AG04449 (cell line): ENCODE measurements at regions of chr2 and their contacts with region 1.

Region 1: DNA sequence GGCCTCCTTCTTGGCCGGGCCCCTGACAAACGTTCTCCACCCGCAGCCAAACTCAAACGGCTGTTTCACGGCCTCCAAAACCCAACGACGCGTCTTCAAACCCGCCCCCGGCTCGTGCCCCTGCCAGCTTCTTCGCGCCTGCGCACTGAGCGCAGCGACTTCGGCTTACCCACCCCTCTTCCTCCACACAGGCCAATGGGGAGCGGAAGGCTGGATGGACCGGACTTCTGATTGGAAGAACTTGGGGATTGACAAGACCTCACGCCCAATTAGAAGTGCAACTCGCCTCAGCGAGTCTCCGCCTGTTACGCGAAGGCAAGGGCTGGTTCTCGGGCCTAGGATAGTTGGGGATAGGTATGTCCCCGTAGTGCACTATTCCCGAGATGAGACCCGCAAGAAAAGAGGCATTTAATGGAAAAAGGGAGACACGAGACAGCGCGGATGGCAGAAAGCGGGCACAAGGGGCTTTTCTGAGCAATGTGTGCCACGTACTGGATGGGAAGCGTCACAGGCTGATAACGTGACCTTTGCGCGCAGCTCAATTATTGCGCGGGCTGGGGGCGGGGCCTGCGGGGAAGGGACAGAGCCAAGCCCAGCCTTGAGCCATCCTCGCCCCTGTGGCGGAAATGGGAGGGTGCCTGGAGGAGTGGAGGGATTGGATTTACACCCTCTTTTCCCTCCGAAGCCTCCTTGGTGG is at the start of gene LAPTM4A:
- DNase-seq: peak; percentile 100
- H3K4me3 ChIP-seq: peak within 1 kb of the TSS; percentile 88
- CTCF ChIP-seq: peak; percentile 13

Region 2: GRCh38 chr2:20025066-20025794 is 26.4 kb before region 1 on chr2:
- CTCF ChIA-PET with region 1: no interaction called
- POLR2A ChIA-PET with region 1: no interaction called
- DNase-seq: no peak
- H3K4me3 ChIP-seq: no peak overlapping the region
- CTCF ChIP-seq: no peak

Region 3: DNA sequence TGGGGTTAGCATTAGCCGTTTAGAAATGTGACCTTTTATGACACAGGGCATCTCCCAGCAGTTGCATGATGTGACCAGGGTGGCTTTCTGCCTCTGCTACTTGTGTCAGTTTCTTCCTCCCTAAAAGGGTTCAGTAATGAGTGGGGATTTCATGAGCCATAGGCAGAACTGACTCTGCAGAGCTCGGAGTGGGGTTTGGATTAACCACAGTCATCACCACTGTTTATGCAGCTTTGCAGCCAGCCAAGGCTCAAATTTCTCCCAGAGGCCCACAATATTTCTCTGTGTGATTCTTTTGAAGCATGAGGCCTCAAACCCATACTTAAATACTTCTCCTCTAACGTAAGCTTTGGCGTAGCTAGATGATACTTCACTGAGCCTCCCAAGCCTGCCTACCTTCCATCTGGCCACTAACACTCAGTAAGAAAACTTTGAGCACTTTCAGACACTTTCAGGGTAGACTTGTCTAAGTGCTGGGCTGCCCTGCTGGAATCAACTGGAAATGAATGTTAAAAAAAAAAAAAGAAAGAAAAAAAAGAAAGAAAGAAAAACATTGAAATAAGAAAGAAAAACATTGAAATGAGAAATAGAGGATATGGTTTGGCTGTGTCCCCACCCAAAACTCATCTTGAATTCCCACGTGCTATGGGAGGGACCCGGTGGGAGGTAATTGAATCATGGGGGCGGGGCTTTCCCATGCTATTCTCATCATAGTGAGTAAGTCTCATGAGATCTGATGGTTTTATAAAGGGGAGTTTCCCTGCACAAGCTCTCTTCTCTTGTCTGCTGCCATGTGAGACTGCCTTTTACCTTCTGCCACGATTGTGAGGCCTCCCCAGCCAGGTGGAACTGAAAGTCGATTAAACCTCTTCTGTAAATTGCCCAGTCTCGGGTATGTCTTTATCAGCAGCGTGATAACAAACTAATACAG is 11.2 kb after region 1 on chr2:
- CTCF ChIA-PET with region 1: interaction called, 6 read pairs
- POLR2A ChIA-PET with region 1: interaction called, 22 read pairs
- DNase-seq: peak; percentile 90
- H3K4me3 ChIP-seq: no peak overlapping the region
- CTCF ChIP-seq: no peak

Region 4: DNA sequence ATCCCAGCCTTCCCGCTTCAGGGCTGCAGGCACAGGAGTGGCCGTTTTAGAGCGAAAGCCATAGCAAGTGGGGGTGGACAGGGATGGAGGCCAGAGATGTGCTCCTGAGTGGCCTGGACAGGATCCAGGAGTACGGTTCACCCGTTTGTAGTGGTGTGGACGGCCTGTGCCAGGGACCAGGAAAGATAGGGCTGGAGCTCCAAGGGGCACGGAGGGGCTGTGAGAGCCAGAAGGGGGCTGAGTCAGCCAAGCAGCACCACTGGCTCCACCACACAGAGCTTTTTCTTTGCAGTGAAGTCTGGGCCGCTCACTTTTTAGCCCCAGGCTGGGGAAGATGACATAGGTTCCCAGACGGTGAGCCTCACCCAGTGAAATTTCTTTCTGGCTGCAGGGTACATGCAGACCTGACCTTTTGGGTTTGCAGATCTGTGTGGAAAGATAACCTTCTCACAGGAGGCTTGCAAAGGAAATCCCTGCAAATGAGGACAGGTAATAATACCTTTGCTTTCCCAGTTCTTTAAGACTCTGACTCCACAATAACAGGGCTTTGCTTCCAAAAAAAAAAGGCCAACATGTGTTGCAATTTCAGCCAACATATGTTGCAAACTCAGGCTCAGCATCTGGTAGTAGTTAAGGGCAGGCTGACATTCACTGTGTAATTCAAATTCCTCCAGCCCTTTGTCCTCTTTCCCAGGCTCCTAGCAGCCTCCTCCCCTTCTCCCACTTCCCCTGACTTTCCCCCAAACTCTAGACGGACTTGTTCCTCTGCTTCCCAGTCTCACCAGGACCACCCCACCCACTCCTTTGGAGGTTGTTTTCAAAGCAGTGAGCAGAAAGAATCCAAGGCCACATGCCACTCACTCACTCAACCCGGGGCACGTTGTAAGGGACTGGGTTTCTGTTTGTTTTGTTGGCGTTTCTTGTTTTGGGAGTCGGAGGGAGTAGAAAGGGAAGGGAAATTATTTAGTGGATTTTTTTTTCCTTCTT is 20.0 kb after region 1 on chr2:
- CTCF ChIA-PET with region 1: interaction called, 3 read pairs
- POLR2A ChIA-PET with region 1: interaction called, 13 read pairs
- DNase-seq: peak; percentile 92
- H3K4me3 ChIP-seq: peak overlapping the region; percentile 32
- CTCF ChIP-seq: no peak